GM10248 (cell line): ENCODE measurements at regions of chr12 and their contacts with region 1.

Region 1: GRCh38 chr12:59499774-59500173 is 96.1 kb upstream of the SLC16A7 start:
- DNase-seq: peak; percentile 10
- CTCF ChIP-seq: no peak

Region 2: GRCh38 chr12:59444932-59445331 is 54.8 kb before region 1 on chr12:
- CTCF ChIA-PET with region 1: no interaction called
- POLR2A ChIA-PET with region 1: no interaction called
- DNase-seq: no peak
- CTCF ChIP-seq: peak; percentile 23

Region 3: GRCh38 chr12:59517522-59517921 is 17.7 kb after region 1 on chr12:
- CTCF ChIA-PET with region 1: interaction called, 19 read pairs
- POLR2A ChIA-PET with region 1: no interaction called
- DNase-seq: no peak
- CTCF ChIP-seq: no peak

Region 4: DNA sequence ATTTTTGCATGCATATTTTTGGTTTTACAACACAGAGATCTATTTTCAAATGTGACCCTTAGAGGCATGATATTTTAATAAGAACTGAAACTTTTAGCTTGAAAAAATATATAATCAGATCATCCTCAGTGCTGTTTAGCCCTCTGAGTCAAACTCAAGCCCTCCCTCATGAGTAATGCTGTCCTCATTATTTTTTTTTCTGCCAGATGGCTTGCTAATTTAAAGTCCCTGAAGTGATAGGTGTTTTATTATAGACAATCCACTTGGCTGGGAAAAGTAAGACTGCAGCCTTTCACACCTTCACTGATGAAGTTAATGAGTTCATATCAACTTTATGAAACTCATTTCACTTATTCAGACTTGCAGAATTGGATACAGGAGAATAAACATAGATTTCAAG is 323.8 kb after region 1 on chr12:
- CTCF ChIA-PET with region 1: no interaction called
- POLR2A ChIA-PET with region 1: no interaction called
- DNase-seq: no peak
- CTCF ChIP-seq: no peak